HepG2 (cell line): ENCODE measurements at regions of chr1 and their contacts with region 1.

Region 1: GRCh38 chr1:219416594-219417238 is 196.2 kb downstream of the ZC3H11B start:
- DNase-seq: peak; percentile 47
- ATAC-seq: peak; percentile 93
- H3K4me3 ChIP-seq: no peak overlapping the region
- H3K27ac ChIP-seq: no peak overlapping the region
- H3K4me1 ChIP-seq: peaks cover 40% of the 10 kb centered on the region
- H3K27me3 ChIP-seq: no peaks in the 10 kb centered on the region
- CTCF ChIP-seq: peak; percentile 69
- EP300 ChIP-seq: no peak
- POLR2A ChIP-seq: no peak
- RAD21 ChIP-seq: peak; percentile 32; the same call in 1 of the 2 replicates

Region 2: GRCh38 chr1:218345673-218346390 is 1070.9 kb before region 1 on chr1:
- CTCF ChIA-PET with region 1: no interaction called
- POLR2A ChIA-PET with region 1: no interaction called
- in situ Hi-C with region 1: loop called (anchors 25 kb)
- intact Hi-C with region 1: no loop called
- DNase-seq: peak; percentile 7
- ATAC-seq: peak; percentile 95
- H3K4me3 ChIP-seq: peak overlapping the region; percentile 56 to 78 (median 56)
- H3K27ac ChIP-seq: no peak overlapping the region
- H3K4me1 ChIP-seq: peaks cover 29% of the 10 kb centered on the region
- H3K27me3 ChIP-seq: peaks cover 2 to 41% of the 10 kb centered on the region in 2 experiments; a peak in 3 of 5 replicates
- CTCF ChIP-seq: 0 out of 2 replicates have a peak, but pooled peaks have one; percentile 11
- EP300 ChIP-seq: no peak
- POLR2A ChIP-seq: no peak
- RAD21 ChIP-seq: no peak

Region 3: GRCh38 chr1:219209578-219209977 is 207.1 kb before region 1 on chr1:
- CTCF ChIA-PET with region 1: interaction called, 4 read pairs
- POLR2A ChIA-PET with region 1: no interaction called
- in situ Hi-C with region 1: no loop called
- intact Hi-C with region 1: loop called (anchors 1 kb)
- DNase-seq: no peak
- ATAC-seq: no peak
- H3K4me3 ChIP-seq: no peak overlapping the region
- H3K27ac ChIP-seq: no peak overlapping the region
- H3K4me1 ChIP-seq: peaks cover 24% of the 10 kb centered on the region
- H3K27me3 ChIP-seq: no peaks in the 10 kb centered on the region
- CTCF ChIP-seq: no peak
- EP300 ChIP-seq: no peak
- POLR2A ChIP-seq: no peak
- RAD21 ChIP-seq: no peak

Region 4: DNA sequence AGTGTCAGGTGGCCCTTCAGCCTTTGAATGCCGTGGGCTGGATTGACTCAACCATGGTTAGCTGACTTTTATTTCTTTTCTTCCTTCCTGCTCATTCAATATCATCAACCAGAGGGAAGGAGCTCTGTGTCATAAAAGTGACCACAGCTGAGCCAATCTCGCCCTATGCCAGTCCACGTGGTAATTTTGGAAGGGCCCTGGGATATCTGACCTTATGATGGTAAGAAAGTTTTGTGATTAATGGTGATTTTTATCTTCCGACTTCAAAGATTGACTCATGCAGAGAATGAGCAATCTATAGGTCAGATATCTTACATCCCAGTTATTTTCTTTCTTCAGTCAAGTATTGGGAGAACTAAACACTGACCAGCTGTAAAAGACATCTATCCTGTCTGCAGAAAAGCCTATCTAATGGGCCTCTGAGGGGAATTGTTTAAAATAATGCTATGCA is 25.9 kb after region 1 on chr1:
- CTCF ChIA-PET with region 1: no interaction called
- POLR2A ChIA-PET with region 1: no interaction called
- in situ Hi-C with region 1: no loop called
- intact Hi-C with region 1: no loop called
- DNase-seq: no peak
- ATAC-seq: no peak
- H3K4me3 ChIP-seq: no peak overlapping the region
- H3K27ac ChIP-seq: no peak overlapping the region
- H3K4me1 ChIP-seq: peaks cover 6% of the 10 kb centered on the region; the same call in 1 of the 2 replicates
- H3K27me3 ChIP-seq: no peaks in the 10 kb centered on the region
- CTCF ChIP-seq: no peak
- EP300 ChIP-seq: no peak
- POLR2A ChIP-seq: no peak
- RAD21 ChIP-seq: no peak

Region 5: GRCh38 chr1:219476116-219476515 is 59.4 kb after region 1 on chr1:
- CTCF ChIA-PET with region 1: no interaction called
- POLR2A ChIA-PET with region 1: no interaction called
- in situ Hi-C with region 1: no loop called
- intact Hi-C with region 1: no loop called
- DNase-seq: no peak
- ATAC-seq: no peak
- H3K4me3 ChIP-seq: no peak overlapping the region
- H3K27ac ChIP-seq: no peak overlapping the region
- H3K4me1 ChIP-seq: no peaks in the 10 kb centered on the region
- H3K27me3 ChIP-seq: no peaks in the 10 kb centered on the region; a peak in 1 of 5 replicates
- CTCF ChIP-seq: no peak
- EP300 ChIP-seq: no peak
- POLR2A ChIP-seq: no peak
- RAD21 ChIP-seq: no peak

Region 6: DNA sequence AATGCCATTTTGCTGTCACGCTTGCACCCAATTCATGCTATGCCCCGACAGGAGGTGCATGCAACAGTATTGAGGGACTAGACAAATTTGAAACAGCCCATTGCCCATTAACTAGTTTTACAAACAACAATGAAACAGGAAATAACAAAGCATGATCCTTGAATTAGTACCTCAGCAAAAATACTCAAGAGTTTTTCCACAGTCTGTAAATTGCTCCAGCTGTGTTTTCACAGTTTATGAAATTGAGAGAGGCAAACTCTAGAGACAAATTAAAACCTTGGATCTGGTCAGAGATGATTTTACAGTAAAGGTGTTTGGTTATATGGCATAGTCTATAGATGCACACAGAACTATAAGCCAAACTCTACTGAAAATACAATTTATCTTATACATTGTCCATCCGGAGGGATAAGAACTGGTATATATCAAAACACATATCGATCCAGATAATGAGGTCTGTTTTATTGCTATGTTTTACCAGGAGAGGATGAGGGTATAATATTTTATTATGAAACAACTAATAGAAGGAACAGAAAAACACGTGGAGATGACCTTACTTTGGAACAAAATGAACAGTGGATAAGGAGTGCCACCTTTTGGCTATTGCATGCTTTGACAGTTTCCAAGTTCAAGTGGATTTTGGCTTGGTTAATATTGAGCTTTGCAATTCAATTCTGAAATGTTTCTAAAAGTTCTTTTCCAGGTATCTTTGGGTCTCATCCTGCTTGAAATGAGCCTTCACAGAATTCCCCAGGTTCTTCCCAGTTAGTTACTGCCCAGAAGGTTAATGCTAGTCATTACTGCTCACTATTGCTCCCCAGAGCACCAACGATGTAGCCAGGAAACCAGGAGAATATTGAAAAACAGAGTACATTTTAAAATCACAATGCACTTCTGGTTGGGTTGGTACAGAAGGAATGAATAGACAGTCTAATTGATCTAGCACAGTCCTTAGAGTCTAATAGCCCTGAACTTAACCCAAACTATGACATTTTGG is 150.5 kb after region 1 on chr1:
- CTCF ChIA-PET with region 1: no interaction called
- POLR2A ChIA-PET with region 1: no interaction called
- in situ Hi-C with region 1: no loop called
- intact Hi-C with region 1: loop called (anchors 10 kb)
- DNase-seq: peak; percentile 20
- ATAC-seq: peak; percentile 57; the same call in 2 of the 3 replicates
- H3K4me3 ChIP-seq: no peak overlapping the region
- H3K27ac ChIP-seq: no peak overlapping the region
- H3K4me1 ChIP-seq: peaks cover 15% of the 10 kb centered on the region
- H3K27me3 ChIP-seq: no peaks in the 10 kb centered on the region; a peak in 1 of 5 replicates
- CTCF ChIP-seq: peak; percentile 64
- EP300 ChIP-seq: no peak
- POLR2A ChIP-seq: no peak
- RAD21 ChIP-seq: no peak